AG04450 (cell line): ENCODE measurements at regions of chr22 and their contacts with region 1.

Region 1: DNA sequence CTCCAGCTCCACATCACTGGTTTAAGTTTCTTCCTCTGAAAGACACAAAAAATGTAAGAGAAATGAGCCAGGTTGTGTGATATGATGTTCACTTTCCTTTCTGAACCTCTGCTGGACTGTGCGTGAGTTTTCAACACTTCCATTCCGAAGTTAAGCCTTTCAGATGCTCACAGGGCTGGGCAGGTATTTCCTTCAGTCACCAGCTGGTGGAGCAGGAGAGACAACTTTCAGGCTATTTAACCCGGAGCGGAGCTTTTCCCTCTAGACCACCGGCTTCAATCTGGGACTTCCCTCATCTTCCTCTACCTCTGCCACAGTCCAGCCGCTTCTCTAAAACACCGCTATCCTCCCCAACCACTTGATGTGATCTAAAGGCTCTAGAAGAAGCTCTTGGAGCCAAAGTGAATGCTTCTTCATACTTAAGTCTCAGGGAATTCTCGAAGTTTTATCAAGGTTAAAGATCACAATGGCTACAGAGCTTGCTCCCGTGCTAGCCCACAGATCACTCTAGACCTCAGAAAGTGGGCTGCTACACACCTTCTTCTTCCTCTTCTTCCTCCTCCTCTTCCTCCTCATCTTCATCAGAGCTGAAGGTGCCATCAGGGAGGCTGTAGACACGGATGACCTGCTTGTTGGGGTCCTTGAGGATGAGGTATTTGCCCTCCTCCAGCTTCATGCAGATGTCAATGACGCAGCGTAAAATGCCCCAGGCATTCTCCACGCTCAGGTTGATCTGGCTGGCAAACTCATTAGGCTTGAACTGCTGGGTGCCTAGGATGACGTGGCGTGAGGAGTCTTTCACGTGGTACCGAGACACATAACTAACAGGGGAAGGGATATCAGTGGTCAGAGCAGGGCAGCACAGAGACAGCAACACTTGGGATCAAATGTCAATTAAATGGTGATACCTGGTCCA is 4.4 kb upstream of the FOXRED2 start:
- DNase-seq: peak; percentile 24
- H3K4me3 ChIP-seq: no peak overlapping the region
- H3K27ac ChIP-seq: no peak overlapping the region
- H3K27me3 ChIP-seq: no peaks in the 10 kb centered on the region
- CTCF ChIP-seq: peak; percentile 81

Region 2: GRCh38 chr22:36522662-36523061 is 11.4 kb after region 1 on chr22:
- CTCF ChIA-PET with region 1: interaction called, 19 read pairs
- POLR2A ChIA-PET with region 1: interaction called, 8 read pairs
- DNase-seq: no peak
- H3K4me3 ChIP-seq: no peak overlapping the region
- H3K27ac ChIP-seq: no peak overlapping the region
- H3K27me3 ChIP-seq: no peaks in the 10 kb centered on the region
- CTCF ChIP-seq: no peak

Region 3: GRCh38 chr22:36734171-36735058 is 223.2 kb after region 1 on chr22:
- CTCF ChIA-PET with region 1: no interaction called
- POLR2A ChIA-PET with region 1: no interaction called
- DNase-seq: no peak
- H3K4me3 ChIP-seq: no peak overlapping the region
- H3K27ac ChIP-seq: no peak overlapping the region
- H3K27me3 ChIP-seq: peaks cover 11% of the 10 kb centered on the region
- CTCF ChIP-seq: no peak